Mucosa of descending colon (tissue), 3 donors: ENCODE measurements at regions of chr12 and their contacts with region 1.

Region 1: GRCh38 chr12:31807773-31808097 is 78.9 kb upstream of the AMN1 start:
- DNase-seq: no peak
- ATAC-seq: no peak
- H3K4me3 ChIP-seq: no peak overlapping the region
- H3K4me1 ChIP-seq: no peaks in the 10 kb centered on the region
- CTCF ChIP-seq: no peak

Region 2: GRCh38 chr12:31779786-31780495 is 27.8 kb before region 1 on chr12:
- intact Hi-C with region 1: loop called in 1 of 2 experiments (anchors 2 kb)
- DNase-seq: no peak
- ATAC-seq: no peak
- H3K4me3 ChIP-seq: no peak overlapping the region
- H3K4me1 ChIP-seq: no peaks in the 10 kb centered on the region
- CTCF ChIP-seq: no peak

Region 3: DNA sequence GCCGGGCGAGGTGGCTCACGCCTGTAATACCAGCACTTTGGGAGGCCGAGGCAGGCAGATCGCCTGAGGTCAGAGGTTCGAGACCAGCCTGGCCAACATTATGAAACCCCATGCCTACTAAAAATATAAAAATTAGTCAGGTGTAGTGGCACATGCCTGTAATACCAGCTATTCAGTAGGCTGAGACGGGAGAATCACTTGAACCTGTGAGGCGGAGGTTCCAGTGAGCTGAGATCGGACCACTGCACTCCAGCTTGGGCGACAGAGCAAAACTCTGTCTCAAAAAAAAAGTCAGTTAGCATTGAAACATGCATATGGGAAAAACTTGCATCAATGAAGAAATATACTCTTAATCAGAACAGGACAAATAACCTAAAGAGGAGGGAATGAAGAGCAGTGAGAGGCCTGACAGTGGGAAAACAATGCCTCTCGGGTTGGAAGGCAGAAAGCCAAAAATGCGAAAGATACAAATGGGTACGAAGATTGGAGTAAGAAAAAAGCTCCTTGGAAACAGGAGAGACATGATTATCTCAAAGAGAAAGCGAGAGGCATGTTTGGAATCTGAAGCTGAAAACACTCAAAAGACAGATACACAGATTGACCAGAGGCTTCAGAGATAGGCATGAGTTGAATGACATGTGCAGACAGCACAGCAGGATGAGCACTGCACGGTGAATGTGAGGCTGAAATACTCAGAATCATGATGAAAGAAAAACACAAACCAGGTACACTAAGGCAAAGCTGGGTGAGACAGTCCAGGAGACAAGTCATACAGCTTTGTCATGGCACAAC is 182.0 kb after region 1 on chr12:
- intact Hi-C with region 1: no loop called
- DNase-seq: no peak
- ATAC-seq: no peak
- H3K4me3 ChIP-seq: no peak overlapping the region
- H3K4me1 ChIP-seq: no peaks in the 10 kb centered on the region
- CTCF ChIP-seq: no peak

Region 4: DNA sequence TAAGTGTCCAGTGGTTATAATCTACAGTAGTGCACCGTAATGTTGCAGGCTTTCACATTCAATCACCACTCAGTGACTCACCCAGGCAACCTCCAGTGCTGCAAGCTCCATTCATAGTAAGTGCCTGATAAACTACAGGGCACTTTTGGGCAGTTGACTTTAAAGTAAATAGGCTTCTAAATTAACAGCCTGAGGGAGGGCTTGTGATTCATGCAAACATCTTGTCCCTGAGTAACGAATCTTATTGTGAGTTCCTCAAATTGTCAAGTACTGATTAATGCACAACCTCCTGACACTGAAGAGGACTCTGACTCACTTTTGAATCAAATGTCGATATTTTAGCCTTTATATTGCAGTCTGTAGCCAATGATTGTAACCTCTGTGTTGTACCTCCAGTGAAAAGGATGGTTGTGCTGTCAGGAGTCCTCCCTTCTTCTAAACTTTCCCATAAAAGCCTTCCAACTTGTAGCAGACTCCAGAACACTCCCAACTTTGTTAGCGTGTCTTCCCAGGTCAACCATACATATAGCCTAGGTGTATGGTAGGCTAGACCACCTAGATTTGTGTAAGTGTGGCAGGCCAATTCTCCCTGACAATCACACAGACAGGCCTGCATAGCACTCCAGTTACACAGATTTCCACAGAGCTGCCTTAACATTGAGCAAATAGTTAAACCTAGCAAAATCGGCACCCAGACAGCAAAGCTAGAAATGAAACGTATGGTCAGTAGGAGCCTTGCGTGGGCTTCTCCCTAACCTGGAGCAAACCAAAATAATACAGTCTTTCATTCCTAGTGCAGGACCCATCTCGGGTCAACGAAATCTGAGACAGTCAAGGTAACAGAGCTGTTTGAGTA is 244.1 kb after region 1 on chr12:
- intact Hi-C with region 1: no loop called
- DNase-seq: no peak
- ATAC-seq: peak; percentile 33
- H3K4me3 ChIP-seq: no peak overlapping the region
- H3K4me1 ChIP-seq: no peaks in the 10 kb centered on the region
- CTCF ChIP-seq: no peak